AG04450 (cell line): ENCODE measurements at regions of chr6 and their contacts with region 1.

Region 1: DNA sequence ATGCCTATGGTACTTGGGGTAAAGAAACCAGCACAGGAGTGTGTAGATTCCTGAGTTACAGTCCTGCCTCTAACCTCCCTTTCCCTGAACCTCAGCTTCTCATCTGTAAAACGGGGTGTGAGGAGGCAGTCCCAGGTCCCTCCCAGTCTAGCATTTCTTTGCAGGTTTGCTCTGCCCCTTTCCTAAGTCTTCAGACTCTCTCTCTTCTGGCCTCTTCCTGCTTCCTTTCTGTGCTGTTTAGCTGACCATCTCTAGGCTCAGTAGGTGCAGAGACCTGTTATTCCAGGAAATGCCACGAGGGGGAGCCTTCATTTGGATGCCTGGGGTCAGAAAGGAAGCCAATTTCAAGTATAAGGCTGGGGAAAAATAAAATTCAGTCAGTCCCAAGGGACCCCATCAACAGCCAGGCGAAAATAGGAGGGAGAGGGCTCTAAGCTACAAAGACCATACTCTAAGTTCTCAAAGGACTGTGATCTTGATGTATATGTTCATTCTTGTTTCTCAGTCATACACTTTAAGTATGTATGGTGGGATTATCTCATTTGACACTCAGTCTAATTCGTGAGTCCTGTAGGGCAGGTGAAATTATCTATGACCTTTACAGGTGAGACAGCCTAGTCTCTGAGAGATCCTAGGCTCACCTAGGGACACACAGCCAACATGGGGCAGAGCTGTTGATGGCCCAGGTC is 89.1 kb downstream of the NCR2 start:
- DNase-seq: peak; percentile 55
- H3K4me3 ChIP-seq: no peak overlapping the region
- H3K27ac ChIP-seq: no peak overlapping the region
- H3K27me3 ChIP-seq: peaks cover 48% of the 10 kb centered on the region
- CTCF ChIP-seq: peak; percentile 92

Region 2: DNA sequence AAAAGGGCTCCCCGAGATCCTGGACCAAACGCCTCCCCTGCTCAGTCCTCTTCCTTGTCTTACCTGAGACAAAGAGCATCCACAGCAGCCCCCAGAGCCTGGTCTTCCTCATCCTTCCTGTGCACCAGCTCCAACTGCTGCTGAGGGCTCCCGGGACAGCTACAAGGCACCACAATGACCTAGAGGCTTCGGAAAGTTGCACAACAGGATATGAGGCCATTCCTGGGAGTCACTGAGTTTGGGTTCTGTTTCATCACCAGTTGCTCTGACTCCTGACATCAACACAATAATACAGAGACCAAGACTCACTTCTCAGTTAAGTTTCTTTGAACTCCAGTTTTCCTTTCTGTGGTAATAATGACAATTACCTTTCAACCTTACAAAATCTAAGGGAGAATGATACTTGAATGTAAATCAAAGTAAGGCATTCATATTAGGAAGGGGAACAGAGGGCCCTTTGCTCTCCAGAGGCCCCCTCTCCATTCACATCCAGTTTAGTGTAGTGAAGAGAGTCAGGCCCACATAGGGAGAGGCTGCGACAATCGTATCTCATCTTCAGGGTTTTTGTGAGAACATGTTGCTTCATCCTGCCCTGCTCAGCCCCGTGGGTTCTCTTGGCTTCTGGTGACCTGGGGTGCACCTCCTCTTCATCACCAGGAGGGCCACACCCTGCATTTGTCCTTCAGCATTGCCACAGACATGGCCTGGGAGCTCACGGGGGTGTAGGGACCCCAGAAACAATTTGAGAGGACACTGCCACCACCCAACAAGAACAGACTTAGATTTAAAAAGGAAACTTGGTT is 137.8 kb before region 1 on chr6 and contains the start of gene TREM1:
- CTCF ChIA-PET with region 1: no interaction called
- POLR2A ChIA-PET with region 1: no interaction called
- DNase-seq: no peak
- H3K4me3 ChIP-seq: no peak within 1 kb of the TSS
- H3K27ac ChIP-seq: no peak within 1 kb of the TSS
- H3K27me3 ChIP-seq: peaks cover 9% of the 10 kb centered on the region
- CTCF ChIP-seq: no peak
- polyA plus RNA-seq, gene TREM1: not detected in 2 replicates

Region 3: GRCh38 chr6:41325446-41326066 is 99.0 kb before region 1 on chr6:
- CTCF ChIA-PET with region 1: no interaction called
- POLR2A ChIA-PET with region 1: no interaction called
- DNase-seq: no peak
- H3K4me3 ChIP-seq: no peak overlapping the region
- H3K27ac ChIP-seq: no peak overlapping the region
- H3K27me3 ChIP-seq: peaks cover 45% of the 10 kb centered on the region
- CTCF ChIP-seq: no peak

Region 4: DNA sequence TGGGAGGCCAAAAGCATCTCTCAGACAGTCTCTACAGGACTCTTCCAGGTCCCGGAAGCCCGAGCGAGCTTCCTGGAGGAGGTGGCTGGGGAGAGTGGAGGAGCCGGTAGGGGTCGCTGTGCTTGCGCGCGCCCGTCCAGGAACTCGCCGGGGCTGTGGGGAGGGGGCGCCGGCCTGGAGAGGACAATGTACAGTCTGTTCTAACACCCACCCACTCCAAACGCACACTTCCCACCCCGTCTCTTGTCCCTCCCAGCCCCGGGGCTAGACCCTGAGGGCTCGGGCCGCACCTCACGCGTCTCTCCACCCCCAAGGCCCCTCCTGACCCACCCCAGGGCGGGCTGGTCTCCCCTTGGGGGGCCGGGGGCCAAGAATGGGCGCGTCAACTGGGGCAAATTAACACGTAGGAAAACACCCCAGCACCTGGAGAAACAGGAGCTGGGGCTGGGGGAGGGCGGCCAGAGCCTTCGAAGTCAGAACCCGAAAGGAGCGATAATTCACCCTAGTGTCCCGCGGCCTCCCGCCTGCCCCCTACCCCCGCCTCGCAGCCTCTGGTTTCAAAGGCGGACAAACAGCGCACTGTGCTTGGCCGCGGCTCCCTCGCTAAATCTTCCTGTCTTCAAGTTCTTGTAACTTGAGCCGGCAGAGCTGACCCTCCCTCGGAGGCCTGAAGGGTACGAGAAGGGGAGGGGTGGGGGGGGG is 18.4 kb after region 1 on chr6:
- CTCF ChIA-PET with region 1: interaction called, 29 read pairs
- POLR2A ChIA-PET with region 1: interaction called, 5 read pairs
- DNase-seq: no peak
- H3K4me3 ChIP-seq: peak overlapping the region; percentile 10; the same call in 1 of the 2 replicates
- H3K27ac ChIP-seq: no peak overlapping the region
- H3K27me3 ChIP-seq: peaks cover 40% of the 10 kb centered on the region
- CTCF ChIP-seq: peak; percentile 62

Region 5: DNA sequence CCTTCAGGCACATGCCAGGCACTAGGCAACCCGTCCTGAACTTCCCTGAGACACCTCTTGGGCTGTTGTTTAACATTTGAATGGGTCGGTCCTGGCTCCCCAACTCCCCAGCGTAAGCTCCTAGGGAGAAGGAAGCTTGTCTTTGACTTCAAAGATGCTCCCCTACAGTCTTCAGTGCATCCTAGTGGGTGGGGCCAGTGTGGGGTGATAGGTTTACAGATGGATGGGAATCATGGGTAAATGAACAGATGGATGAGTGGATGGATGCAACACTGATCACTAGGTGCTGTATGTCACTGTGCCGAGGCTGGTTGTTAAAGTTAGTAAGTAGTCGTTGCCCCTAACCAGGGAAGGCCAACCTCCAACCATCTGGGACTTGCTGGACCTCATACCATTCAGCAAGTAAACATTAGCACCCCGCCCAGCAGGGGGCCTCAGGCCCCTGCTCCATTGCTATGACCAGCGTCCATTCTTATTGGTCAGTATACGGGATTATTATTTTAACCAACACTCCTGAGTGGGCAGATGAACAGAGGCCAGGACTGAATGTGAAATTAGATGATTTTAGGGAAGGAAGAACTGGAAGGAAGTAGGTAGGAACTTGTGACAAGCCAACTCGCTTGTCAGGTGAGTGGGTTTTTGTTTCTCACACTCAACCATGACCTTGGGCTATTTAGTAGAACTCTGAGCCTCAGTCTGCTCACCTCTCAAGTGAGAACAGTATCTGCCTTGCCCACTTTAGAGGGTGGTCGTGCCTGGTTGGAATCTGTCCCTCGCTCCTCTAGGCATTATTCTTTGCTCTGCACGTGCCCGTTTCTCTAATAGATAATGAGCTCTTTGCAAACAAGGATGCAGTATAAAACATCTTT is 38.8 kb after region 1 on chr6:
- CTCF ChIA-PET with region 1: interaction called, 12 read pairs
- POLR2A ChIA-PET with region 1: no interaction called
- DNase-seq: peak; percentile 30
- H3K4me3 ChIP-seq: no peak overlapping the region
- H3K27ac ChIP-seq: no peak overlapping the region
- H3K27me3 ChIP-seq: peaks cover 1% of the 10 kb centered on the region
- CTCF ChIP-seq: peak; percentile 85

Region 6: DNA sequence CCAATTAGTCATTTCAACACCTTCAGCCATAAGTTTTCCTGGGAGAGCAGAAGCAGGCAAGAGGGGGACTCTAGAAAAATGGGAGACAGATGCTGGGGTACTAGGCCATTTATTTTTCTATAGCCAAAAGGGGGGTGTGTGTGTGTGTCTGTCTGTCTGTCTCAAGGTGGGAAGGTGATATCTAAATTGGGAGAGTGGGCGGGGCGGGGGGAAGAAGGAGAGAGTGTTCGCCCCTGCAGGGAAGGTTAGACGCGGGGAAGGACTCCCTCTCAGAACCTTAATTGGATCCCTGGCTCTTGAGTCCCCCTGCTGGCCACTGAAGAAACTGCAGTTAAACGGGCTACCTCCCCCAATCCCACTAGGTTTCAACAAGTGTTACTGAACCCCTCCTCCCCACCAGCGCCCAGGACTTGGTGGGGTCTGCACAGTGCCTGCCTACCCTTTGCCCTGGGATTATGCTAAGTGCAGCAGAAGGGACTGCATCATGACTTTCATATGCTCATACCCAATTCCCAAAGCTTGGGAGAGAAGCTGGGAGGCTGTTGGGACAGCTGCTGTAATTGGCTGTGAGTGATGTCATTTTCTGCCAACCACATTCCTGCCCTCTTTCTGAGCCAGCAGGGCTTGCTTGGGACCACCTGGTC is 167.5 kb after region 1 on chr6:
- CTCF ChIA-PET with region 1: interaction called, 46 read pairs
- POLR2A ChIA-PET with region 1: no interaction called
- DNase-seq: peak; percentile 27
- H3K4me3 ChIP-seq: no peak overlapping the region
- H3K27ac ChIP-seq: no peak overlapping the region
- H3K27me3 ChIP-seq: no peaks in the 10 kb centered on the region
- CTCF ChIP-seq: peak; percentile 93

Region 7: GRCh38 chr6:41597246-41598000 is 172.9 kb after region 1 on chr6:
- CTCF ChIA-PET with region 1: interaction called, 46 read pairs
- POLR2A ChIA-PET with region 1: no interaction called
- DNase-seq: no peak
- H3K4me3 ChIP-seq: no peak overlapping the region
- H3K27ac ChIP-seq: no peak overlapping the region
- H3K27me3 ChIP-seq: no peaks in the 10 kb centered on the region
- CTCF ChIP-seq: no peak